ENCODE measurements at regions of chr18 and their contacts with region 1.

Region 1: GRCh38 chr18:75638776-75639471 is 211.4 kb upstream of the SMIM21 start:
- DNase-seq: no peak
- H3K4me3 ChIP-seq: no peak overlapping the region
- H3K27ac ChIP-seq: no peak overlapping the region
- H3K4me1 ChIP-seq: peaks cover 6 to 19% of the 10 kb centered on the region in 2 donors
- H3K27me3 ChIP-seq: no peaks in the 10 kb centered on the region
- CTCF ChIP-seq: no peak
- POLR2A ChIP-seq: no peak

Region 2: DNA sequence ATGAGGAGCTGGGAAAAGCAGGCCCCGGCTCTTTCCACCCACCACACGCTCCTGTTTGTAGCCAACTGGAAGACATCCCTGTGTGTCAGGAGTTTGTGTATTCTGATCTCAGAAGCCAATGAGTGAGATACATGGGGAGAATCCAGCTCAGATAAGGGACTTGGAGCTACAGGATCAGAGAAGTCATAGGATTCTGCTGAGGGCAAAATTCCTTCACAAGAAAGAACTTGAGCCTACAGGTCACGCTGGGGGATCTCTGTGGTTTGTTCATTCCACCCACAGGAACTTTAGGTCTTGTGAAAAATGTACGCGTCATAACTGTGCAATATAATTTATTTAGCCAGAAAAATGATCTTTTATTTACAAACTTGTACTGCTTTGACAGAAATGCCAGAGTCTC is 131.3 kb before region 1 on chr18:
- intact Hi-C with region 1: loop called (anchors 10 kb)
- DNase-seq: no peak
- H3K4me3 ChIP-seq: no peak overlapping the region
- H3K27ac ChIP-seq: no peak overlapping the region
- H3K4me1 ChIP-seq: peaks cover 0 to 12% of the 10 kb centered on the region in 2 donors
- H3K27me3 ChIP-seq: no peaks in the 10 kb centered on the region
- CTCF ChIP-seq: no peak
- POLR2A ChIP-seq: no peak

Region 3: GRCh38 chr18:75830828-75831227 is 191.9 kb after region 1 on chr18:
- intact Hi-C with region 1: no loop called
- DNase-seq: no peak
- H3K4me3 ChIP-seq: no peak overlapping the region
- H3K27ac ChIP-seq: no peak overlapping the region
- H3K4me1 ChIP-seq: peaks cover 0 to 2% of the 10 kb centered on the region in 2 donors
- H3K27me3 ChIP-seq: no peaks in the 10 kb centered on the region
- CTCF ChIP-seq: no peak
- POLR2A ChIP-seq: no peak

Region 4: DNA sequence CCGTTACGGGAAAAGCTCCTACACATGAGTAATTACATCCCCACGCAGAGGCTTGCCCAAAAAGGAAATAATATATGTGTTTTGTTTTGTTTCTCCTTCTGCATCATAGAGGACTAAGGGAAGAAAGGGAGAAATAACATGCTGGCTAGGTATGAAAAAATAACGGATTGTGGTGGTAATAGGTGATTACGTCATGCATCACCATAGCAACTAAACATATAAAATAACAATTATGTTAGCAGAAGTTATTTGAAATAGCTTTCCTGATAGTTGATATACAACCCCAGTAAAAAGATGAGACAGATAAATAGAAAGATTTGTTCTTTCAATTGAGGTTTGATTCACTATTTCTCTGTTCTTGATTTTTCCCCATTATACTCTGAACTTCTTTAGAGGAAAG is 338.2 kb after region 1 on chr18:
- intact Hi-C with region 1: no loop called
- DNase-seq: no peak
- H3K4me3 ChIP-seq: no peak overlapping the region
- H3K27ac ChIP-seq: no peak overlapping the region
- H3K4me1 ChIP-seq: no peaks in the 10 kb centered on the region
- H3K27me3 ChIP-seq: no peaks in the 10 kb centered on the region
- CTCF ChIP-seq: no peak
- POLR2A ChIP-seq: no peak